ENCODE measurements at regions of chr14 and their contacts with region 1.

Region 1: DNA sequence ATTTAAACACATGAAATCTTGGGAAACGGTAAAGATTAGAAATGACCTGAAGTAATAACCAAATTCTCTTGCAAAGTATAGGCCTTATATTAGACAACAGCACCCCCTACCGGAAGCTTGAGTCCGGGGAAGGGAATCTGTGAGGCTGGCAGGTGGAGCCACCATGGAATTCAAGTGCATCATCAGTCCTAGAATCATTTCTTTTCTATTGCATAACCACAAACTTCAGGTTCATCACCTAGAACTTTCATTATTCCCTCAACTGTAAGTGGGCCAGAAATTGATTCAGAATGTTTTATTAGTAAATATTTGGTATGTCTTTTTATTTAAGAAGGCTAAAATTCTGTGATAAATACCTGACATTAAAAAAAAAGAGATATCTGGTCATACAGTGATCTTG is 48.5 kb downstream of the AP5M1 start:
- DNase-seq: peak; percentile 28 to 76 (median 68)
- ATAC-seq: peak; percentile 76
- H3K4me3 ChIP-seq: no peak overlapping the region
- H3K4me3 Mint-ChIP-seq: no peak overlapping the region
- H3K27ac ChIP-seq: no peak overlapping the region
- H3K27ac Mint-ChIP-seq: peak overlapping the region in 1 of 9 donors; percentile 52
- H3K4me1 ChIP-seq: no peaks in the 10 kb centered on the region
- H3K4me1 Mint-ChIP-seq: peaks cover 0 to 6% (median 5%) of the 10 kb centered on the region in 7 donors
- H3K27me3 ChIP-seq: no peaks in the 10 kb centered on the region
- H3K27me3 Mint-ChIP-seq: peaks cover 0 to 5% (median 0%) of the 10 kb centered on the region in 5 donors

Region 2: GRCh38 chr14:55731881-55732498 is 1585.3 kb before region 1 on chr14:
- CTCF ChIA-PET with region 1: no interaction called
- POLR2A ChIA-PET with region 1: no interaction called
- intact Hi-C with region 1: loop called in 1 of 2 experiments (anchors 2 kb)
- DNase-seq: peak; percentile 8 to 58 (median 33)
- ATAC-seq: peak; percentile 44
- H3K4me3 ChIP-seq: no peak overlapping the region
- H3K4me3 Mint-ChIP-seq: no peak overlapping the region
- H3K27ac ChIP-seq: no peak overlapping the region
- H3K27ac Mint-ChIP-seq: no peak overlapping the region
- H3K4me1 ChIP-seq: no peaks in the 10 kb centered on the region
- H3K4me1 Mint-ChIP-seq: peaks cover 0 to 19% (median 0%) of the 10 kb centered on the region in 7 donors
- H3K27me3 ChIP-seq: no peaks in the 10 kb centered on the region
- H3K27me3 Mint-ChIP-seq: peaks cover 0 to 16% (median 4%) of the 10 kb centered on the region in 5 donors

Region 3: DNA sequence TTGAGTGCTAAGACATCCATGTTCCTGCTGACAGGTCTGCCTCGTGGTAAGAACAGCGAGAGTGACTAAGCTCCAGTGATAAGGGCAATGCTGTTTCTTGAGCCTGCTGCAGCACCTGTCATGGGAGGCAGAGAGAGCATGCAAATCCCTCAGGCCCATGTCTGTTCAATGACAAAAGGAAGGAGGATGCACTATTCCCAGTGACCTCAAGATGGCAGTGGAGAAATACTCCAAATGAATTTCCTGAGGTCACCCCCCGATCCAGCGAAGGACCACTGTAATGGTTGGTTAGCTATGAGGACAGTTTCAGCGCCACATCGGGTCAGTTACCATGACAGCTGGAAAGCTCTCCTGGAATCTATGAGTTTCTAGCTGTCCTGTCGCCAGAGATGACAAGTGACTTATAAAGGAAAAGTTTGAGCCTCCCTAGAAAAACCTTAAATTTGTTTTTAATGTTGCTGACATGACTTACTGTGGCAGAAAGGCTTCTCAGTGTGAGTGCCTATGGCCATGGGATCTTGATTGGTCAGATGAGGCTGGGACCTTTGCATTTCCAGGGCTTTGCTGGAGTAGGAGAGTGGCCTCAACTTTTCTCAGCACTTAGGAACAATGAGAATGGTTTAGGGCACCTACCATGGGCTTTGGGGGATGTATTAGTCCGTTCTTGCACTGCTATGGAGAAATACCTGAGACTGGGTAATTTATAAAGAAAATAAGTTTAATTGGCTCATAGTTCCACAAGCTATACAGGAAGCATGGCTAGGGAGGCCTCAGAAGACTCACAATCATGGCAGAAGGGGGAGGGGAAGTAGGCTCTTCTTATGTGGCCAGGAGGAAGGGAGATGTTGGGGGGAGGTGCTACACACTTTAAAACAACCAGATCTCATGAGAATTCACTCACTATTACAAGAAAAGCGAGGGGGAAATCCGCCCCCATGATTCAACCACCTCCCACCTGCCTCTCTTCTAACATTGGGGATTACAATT is 825.7 kb before region 1 on chr14:
- CTCF ChIA-PET with region 1: interaction called, 22 read pairs
- POLR2A ChIA-PET with region 1: no interaction called
- intact Hi-C with region 1: loop called (anchors 1 kb)
- DNase-seq: peak in 5 of 9 donors; percentile 10 to 36 (median 21)
- ATAC-seq: no peak
- H3K4me3 ChIP-seq: peak overlapping the region; percentile 22
- H3K4me3 Mint-ChIP-seq: peak overlapping the region in 6 of 10 donors; percentile 40 to 59 (median 48)
- H3K27ac ChIP-seq: no peak overlapping the region
- H3K27ac Mint-ChIP-seq: no peak overlapping the region
- H3K4me1 ChIP-seq: no peaks in the 10 kb centered on the region
- H3K4me1 Mint-ChIP-seq: peaks cover 0 to 13% (median 10%) of the 10 kb centered on the region in 7 donors
- H3K27me3 ChIP-seq: no peaks in the 10 kb centered on the region
- H3K27me3 Mint-ChIP-seq: peaks cover 0 to 6% (median 0%) of the 10 kb centered on the region in 5 donors

Region 4: DNA sequence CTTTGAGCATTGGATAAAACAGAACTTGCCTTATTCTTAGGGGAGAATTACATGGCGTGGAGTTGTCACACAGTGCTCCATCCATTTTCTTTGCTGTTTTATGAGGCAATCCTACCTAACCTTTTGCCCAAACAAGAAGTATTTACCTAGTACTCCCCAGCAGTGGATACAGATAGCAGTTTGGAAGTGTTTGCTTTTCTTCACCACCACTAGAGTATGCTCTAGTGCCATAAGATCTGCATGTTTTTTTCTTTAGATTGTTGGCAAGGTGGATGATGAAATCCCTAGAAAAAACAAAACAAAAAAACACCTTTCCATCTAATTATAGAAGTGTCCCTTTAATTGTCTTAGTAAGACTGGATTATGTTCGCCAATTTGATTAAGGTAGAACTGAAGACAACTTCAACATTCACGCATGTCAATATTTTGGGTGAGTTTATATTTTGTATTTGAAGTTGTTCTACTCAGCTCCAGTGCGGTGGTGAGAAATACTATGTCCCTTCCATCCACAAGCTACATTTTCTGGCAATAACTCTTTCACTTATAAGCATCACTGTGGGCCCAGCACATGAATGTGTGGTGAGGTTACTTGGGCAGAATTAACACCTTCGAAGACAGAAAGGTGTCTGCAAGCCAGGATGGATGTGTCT is 761.3 kb before region 1 on chr14:
- CTCF ChIA-PET with region 1: no interaction called
- POLR2A ChIA-PET with region 1: no interaction called
- intact Hi-C with region 1: loop called in 1 of 2 experiments (anchors 10 kb)
- DNase-seq: no peak
- ATAC-seq: no peak
- H3K4me3 ChIP-seq: no peak overlapping the region
- H3K4me3 Mint-ChIP-seq: no peak overlapping the region
- H3K27ac ChIP-seq: no peak overlapping the region
- H3K27ac Mint-ChIP-seq: no peak overlapping the region
- H3K4me1 ChIP-seq: no peaks in the 10 kb centered on the region
- H3K4me1 Mint-ChIP-seq: peaks cover 0 to 1% (median 0%) of the 10 kb centered on the region in 7 donors
- H3K27me3 ChIP-seq: peaks cover 0 to 4% of the 10 kb centered on the region in 2 donors
- H3K27me3 Mint-ChIP-seq: peaks cover 11 to 42% (median 18%) of the 10 kb centered on the region in 5 donors

Region 5: DNA sequence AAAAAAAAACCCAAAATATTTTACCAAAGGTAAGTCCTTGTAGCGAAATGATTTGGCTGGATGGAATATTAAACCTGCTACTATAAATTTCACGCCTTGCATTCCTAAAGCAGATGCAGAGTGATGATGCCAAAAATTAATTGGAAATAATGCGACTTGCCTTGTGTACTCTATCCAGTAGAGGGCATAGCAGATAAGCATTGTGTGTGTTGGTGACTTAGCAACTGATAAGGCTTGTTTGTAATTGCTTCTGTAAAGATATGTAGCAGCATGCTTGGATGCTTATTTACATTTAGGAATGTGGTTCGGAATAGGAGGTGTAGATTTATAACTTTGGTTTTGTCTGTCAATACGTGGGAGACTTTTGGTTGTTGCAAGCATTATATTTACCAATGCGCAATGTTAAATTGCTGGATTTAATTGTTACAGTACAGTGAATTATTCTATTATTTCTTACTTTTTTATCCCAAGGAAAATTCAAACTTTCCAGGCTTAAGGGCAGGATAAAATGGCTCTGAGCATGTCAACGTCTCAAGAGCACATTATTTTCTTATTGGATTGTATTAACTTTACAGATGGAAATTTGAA is 657.3 kb before region 1 on chr14:
- CTCF ChIA-PET with region 1: no interaction called
- POLR2A ChIA-PET with region 1: no interaction called
- intact Hi-C with region 1: loop called in 1 of 2 experiments (anchors 5 kb)
- DNase-seq: peak in 1 of 9 donors; percentile 6
- ATAC-seq: no peak
- H3K4me3 ChIP-seq: no peak overlapping the region
- H3K4me3 Mint-ChIP-seq: no peak overlapping the region
- H3K27ac ChIP-seq: no peak overlapping the region
- H3K27ac Mint-ChIP-seq: no peak overlapping the region
- H3K4me1 ChIP-seq: no peaks in the 10 kb centered on the region
- H3K4me1 Mint-ChIP-seq: no peaks in the 10 kb centered on the region
- H3K27me3 ChIP-seq: no peaks in the 10 kb centered on the region
- H3K27me3 Mint-ChIP-seq: peaks cover 0 to 7% (median 4%) of the 10 kb centered on the region in 5 donors

Region 6: GRCh38 chr14:57066887-57067513 is 250.3 kb before region 1 on chr14:
- CTCF ChIA-PET with region 1: no interaction called
- POLR2A ChIA-PET with region 1: no interaction called
- intact Hi-C with region 1: loop called in 1 of 2 experiments (anchors 5 kb)
- DNase-seq: peak in 1 of 9 donors; percentile 41
- ATAC-seq: no peak
- H3K4me3 ChIP-seq: no peak overlapping the region
- H3K4me3 Mint-ChIP-seq: no peak overlapping the region
- H3K27ac ChIP-seq: no peak overlapping the region
- H3K27ac Mint-ChIP-seq: no peak overlapping the region
- H3K4me1 ChIP-seq: no peaks in the 10 kb centered on the region
- H3K4me1 Mint-ChIP-seq: peaks cover 0 to 8% (median 0%) of the 10 kb centered on the region in 7 donors
- H3K27me3 ChIP-seq: no peaks in the 10 kb centered on the region
- H3K27me3 Mint-ChIP-seq: peaks cover 36 to 45% (median 39%) of the 10 kb centered on the region in 5 donors

Region 7: DNA sequence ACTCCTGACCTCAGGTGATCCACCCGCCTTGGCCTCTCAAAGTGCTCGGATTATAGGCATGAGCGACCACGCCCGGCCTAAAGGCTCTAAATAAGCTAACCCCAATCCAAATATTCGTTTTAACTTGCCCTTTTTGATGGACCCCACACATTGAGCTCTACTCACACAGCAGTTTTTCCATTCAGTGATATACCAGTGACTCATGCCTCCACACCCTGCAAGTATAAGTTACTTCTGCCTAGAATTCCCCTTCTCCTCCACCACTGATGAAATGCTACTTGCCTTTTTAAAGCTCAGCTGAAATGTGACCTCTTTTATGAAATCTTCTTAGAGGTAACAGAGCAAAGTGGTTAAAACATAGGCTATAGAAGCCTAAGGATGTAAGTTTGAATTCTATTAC is 117.4 kb before region 1 on chr14:
- CTCF ChIA-PET with region 1: interaction called, 6 read pairs
- POLR2A ChIA-PET with region 1: interaction called, 3 read pairs
- intact Hi-C with region 1: loop called in 1 of 2 experiments (anchors 1 kb)
- DNase-seq: no peak
- ATAC-seq: no peak
- H3K4me3 ChIP-seq: no peak overlapping the region
- H3K4me3 Mint-ChIP-seq: no peak overlapping the region
- H3K27ac ChIP-seq: no peak overlapping the region
- H3K27ac Mint-ChIP-seq: no peak overlapping the region
- H3K4me1 ChIP-seq: no peaks in the 10 kb centered on the region
- H3K4me1 Mint-ChIP-seq: no peaks in the 10 kb centered on the region
- H3K27me3 ChIP-seq: no peaks in the 10 kb centered on the region
- H3K27me3 Mint-ChIP-seq: peaks cover 6 to 13% (median 11%) of the 10 kb centered on the region in 5 donors

Region 8: DNA sequence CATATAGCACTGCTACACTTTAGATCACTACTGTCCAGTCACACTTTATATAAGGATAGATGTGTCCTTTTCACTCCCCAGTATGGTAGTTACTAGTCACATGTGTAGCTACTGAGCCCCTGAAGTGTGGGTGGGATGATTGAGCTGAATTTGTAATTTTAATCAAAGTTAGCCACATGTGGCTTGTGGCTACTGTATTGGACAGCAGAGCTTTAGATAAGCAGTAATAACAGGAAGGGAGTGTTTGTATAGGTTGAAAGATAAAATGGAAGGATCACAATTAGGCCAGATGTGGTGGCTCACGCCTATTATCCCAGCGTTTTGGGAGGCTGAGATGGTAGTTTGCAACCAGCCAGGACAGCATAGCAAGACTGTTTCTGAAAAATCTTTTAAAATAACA is 96.5 kb after region 1 on chr14:
- CTCF ChIA-PET with region 1: no interaction called
- POLR2A ChIA-PET with region 1: no interaction called
- intact Hi-C with region 1: no loop called
- DNase-seq: no peak
- ATAC-seq: no peak
- H3K4me3 ChIP-seq: no peak overlapping the region
- H3K4me3 Mint-ChIP-seq: no peak overlapping the region
- H3K27ac ChIP-seq: no peak overlapping the region
- H3K27ac Mint-ChIP-seq: peak overlapping the region in 2 of 9 donors; percentile 38 to 63
- H3K4me1 ChIP-seq: no peaks in the 10 kb centered on the region
- H3K4me1 Mint-ChIP-seq: peaks cover 0 to 20% (median 10%) of the 10 kb centered on the region in 7 donors
- H3K27me3 ChIP-seq: no peaks in the 10 kb centered on the region
- H3K27me3 Mint-ChIP-seq: no peaks in the 10 kb centered on the region

Measured in naive thymus-derived CD4-positive, alpha-beta T cell (primary cell).